Caco-2 (cell line): ENCODE measurements at regions of chr11 and their contacts with region 1.

Region 1: DNA sequence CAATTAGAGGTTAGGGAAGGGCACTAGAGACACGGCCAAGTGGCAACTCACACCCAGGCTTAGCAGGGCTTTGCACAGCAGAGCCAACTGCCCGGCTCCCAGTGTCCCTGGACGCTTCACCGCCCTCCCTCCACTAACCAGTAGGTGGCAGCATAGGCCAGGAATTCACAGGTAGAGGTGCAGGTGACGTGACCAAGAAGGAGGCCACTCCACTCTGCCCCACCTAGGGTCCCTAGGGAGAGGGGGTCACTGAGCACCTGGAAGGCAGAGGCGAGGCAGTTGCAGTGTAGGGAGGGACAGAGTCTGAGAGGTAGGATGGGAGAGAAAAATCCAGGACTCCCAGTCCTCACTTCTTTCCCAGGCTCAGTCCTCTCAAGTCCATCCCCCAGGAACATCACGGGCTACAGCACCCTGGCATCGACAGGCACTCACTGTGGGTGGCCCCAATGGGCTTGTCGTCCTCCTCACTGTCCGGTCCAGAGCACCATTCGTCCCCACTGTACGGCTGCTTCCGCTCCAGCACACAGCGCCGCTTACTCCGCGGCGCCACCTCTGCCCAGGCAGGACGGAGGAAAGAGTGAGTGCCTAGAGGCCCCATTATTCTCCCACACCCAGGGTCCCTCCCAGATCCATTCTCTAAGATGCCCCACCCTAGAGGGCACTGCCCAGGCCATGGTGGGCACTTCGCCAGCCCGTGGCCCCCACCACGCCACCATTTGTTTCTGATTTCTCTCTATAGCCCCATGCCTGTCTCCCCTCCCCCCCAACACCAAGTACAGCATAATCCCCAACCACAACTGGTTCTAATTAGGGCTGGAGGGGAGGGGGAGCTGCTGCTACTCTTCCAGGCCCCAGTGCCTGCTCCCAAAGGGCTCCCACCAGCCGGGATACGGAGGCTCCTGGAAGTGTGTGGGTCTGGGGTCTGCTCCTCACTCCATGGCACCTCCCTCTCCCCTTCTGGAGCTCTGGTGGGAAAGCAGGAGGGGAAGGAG is 18.4 kb downstream of the BCL9L start:
- DNase-seq: peak; percentile 94 to 98
- H3K4me3 ChIP-seq: no peak overlapping the region
- H3K4me3 Mint-ChIP-seq: peak overlapping the region; percentile 45
- H3K27ac Mint-ChIP-seq: peak overlapping the region; percentile 96
- H3K4me1 ChIP-seq: peaks cover 45% of the 10 kb centered on the region
- H3K4me1 Mint-ChIP-seq: peaks cover 35% of the 10 kb centered on the region
- H3K27me3 ChIP-seq: no peaks in the 10 kb centered on the region
- H3K27me3 Mint-ChIP-seq: no peaks in the 10 kb centered on the region
- CTCF ChIP-seq: peak; percentile 96 to 99

Region 2: GRCh38 chr11:118621071-118621783 is 286.1 kb before region 1 on chr11:
- CTCF ChIA-PET with region 1: no interaction called
- POLR2A ChIA-PET with region 1: interaction called, 3 read pairs
- intact Hi-C with region 1: loop called (anchors 5 kb)
- DNase-seq: peak; percentile 96 to 97
- H3K4me3 ChIP-seq: peak overlapping the region; percentile 63
- H3K4me3 Mint-ChIP-seq: peak overlapping the region; percentile 87
- H3K27ac Mint-ChIP-seq: peak overlapping the region; percentile 93
- H3K4me1 ChIP-seq: peaks cover 49% of the 10 kb centered on the region
- H3K4me1 Mint-ChIP-seq: peaks cover 37% of the 10 kb centered on the region
- H3K27me3 ChIP-seq: no peaks in the 10 kb centered on the region
- H3K27me3 Mint-ChIP-seq: no peaks in the 10 kb centered on the region
- CTCF ChIP-seq: no peak

Region 3: GRCh38 chr11:118791111-118791965 is 116.0 kb before region 1 on chr11 and contains the start of gene DDX6:
- CTCF ChIA-PET with region 1: interaction called, 15 read pairs
- POLR2A ChIA-PET with region 1: interaction called, 20 read pairs
- intact Hi-C with region 1: no loop called
- DNase-seq: peak; percentile 96 to 98
- H3K4me3 ChIP-seq: peak within 1 kb of the TSS; percentile 63
- H3K4me3 Mint-ChIP-seq: peak within 1 kb of the TSS; percentile 93
- H3K27ac Mint-ChIP-seq: peak within 1 kb of the TSS; percentile 90
- H3K4me1 ChIP-seq: peaks cover 23% of the 10 kb centered on the region
- H3K4me1 Mint-ChIP-seq: peaks cover 23% of the 10 kb centered on the region
- H3K27me3 ChIP-seq: no peaks in the 10 kb centered on the region
- H3K27me3 Mint-ChIP-seq: no peaks in the 10 kb centered on the region
- CTCF ChIP-seq: peak in 1 of 2 experiments; percentile 76
- total RNA-seq, gene DDX6: 131 and 135 TPM in 2 replicates

Region 4: GRCh38 chr11:118956094-118956846 is 48.9 kb after region 1 on chr11 and contains the start of gene UPK2:
- CTCF ChIA-PET with region 1: interaction called, 7 read pairs
- POLR2A ChIA-PET with region 1: interaction called, 3 read pairs
- intact Hi-C with region 1: loop called (anchors 1 kb)
- DNase-seq: peak; percentile 93 to 96
- H3K4me3 ChIP-seq: no peak within 1 kb of the TSS
- H3K4me3 Mint-ChIP-seq: peak within 1 kb of the TSS; percentile 5
- H3K27ac Mint-ChIP-seq: peak within 1 kb of the TSS; percentile 34
- H3K4me1 ChIP-seq: peaks cover 15% of the 10 kb centered on the region
- H3K4me1 Mint-ChIP-seq: peaks cover 15% of the 10 kb centered on the region
- H3K27me3 ChIP-seq: no peaks in the 10 kb centered on the region
- H3K27me3 Mint-ChIP-seq: peaks cover 2% of the 10 kb centered on the region
- CTCF ChIP-seq: peak; percentile 99 to 100
- total RNA-seq, gene UPK2: 1.8 and 3.5 TPM in 2 replicates

Region 5: GRCh38 chr11:118997627-118998387 is 90.5 kb after region 1 on chr11 and contains the start of gene CENATAC:
- CTCF ChIA-PET with region 1: interaction called, 3 read pairs
- POLR2A ChIA-PET with region 1: interaction called, 24 read pairs
- intact Hi-C with region 1: no loop called
- DNase-seq: peak; percentile 98 to 100
- H3K4me3 ChIP-seq: peak within 1 kb of the TSS; percentile 75
- H3K4me3 Mint-ChIP-seq: peak within 1 kb of the TSS; percentile 96
- H3K27ac Mint-ChIP-seq: peak within 1 kb of the TSS; percentile 94
- H3K4me1 ChIP-seq: peaks cover 17% of the 10 kb centered on the region
- H3K4me1 Mint-ChIP-seq: peaks cover 24% of the 10 kb centered on the region
- H3K27me3 ChIP-seq: no peaks in the 10 kb centered on the region
- H3K27me3 Mint-ChIP-seq: no peaks in the 10 kb centered on the region
- CTCF ChIP-seq: peak in 1 of 2 experiments; percentile 11
- total RNA-seq, gene CENATAC: 185 and 194 TPM in 2 replicates

Region 6: DNA sequence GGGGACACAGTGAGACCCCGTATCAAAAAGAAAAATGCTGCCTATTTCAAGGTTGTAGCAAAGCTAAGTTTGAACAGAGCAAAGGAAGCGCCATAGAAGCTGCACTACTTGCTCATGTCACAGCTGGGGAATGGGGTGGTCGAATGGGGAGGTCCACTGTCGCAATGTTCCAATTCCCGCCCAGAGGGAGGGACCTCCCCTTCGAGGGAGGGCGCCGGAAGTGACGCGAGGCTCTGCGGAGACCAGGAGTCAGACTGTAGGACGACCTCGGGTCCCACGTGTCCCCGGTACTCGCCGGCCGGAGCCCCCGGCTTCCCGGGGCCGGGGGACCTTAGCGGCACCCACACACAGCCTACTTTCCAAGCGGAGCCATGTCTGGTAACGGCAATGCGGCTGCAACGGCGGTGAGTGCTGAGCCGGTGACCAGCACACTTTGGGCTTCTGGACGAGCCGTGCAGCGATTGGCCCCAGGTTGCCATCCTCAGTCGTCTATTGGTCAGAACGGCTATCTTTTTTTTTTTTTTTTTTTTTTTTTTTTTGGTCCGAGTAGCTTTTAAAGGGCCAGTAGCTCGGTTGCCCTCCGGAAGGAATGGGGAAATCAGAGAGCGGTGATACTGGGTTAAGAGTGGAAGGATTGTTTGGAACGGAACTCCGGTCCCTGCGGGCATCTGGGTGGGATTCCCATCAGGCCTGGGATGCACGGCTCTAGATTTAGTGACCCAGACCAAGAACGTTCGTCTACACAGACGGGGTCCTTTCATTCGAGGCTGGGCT is 177.5 kb after region 1 on chr11 and contains the start of gene HMBS:
- CTCF ChIA-PET with region 1: interaction called, 8 read pairs
- POLR2A ChIA-PET with region 1: interaction called, 12 read pairs
- intact Hi-C with region 1: no loop called
- DNase-seq: peak; percentile 97 to 98
- H3K4me3 ChIP-seq: peak within 1 kb of the TSS; percentile 85
- H3K4me3 Mint-ChIP-seq: peak within 1 kb of the TSS; percentile 97
- H3K27ac Mint-ChIP-seq: peak within 1 kb of the TSS; percentile 98
- H3K4me1 ChIP-seq: peaks cover 11% of the 10 kb centered on the region
- H3K4me1 Mint-ChIP-seq: peaks cover 1% of the 10 kb centered on the region
- H3K27me3 ChIP-seq: no peaks in the 10 kb centered on the region
- H3K27me3 Mint-ChIP-seq: no peaks in the 10 kb centered on the region
- CTCF ChIP-seq: no peak
- total RNA-seq, gene HMBS: 94.9 and 95.7 TPM in 2 replicates